ENCODE measurements at regions of chr2 and their contacts with region 1.

Region 1: GRCh38 chr2:19649785-19650380 is 251.9 kb downstream of the TTC32 start:
- DNase-seq: peak; percentile 99
- H3K4me3 ChIP-seq: no peak overlapping the region
- CTCF ChIP-seq: no peak

Region 2: GRCh38 chr2:19667085-19667484 is 17.2 kb after region 1 on chr2:
- CTCF ChIA-PET with region 1: interaction called, 15 read pairs
- POLR2A ChIA-PET with region 1: no interaction called
- DNase-seq: no peak
- H3K4me3 ChIP-seq: no peak overlapping the region
- CTCF ChIP-seq: peak; percentile 38